GM12878 (cell line): ENCODE measurements at regions of chr11 and their contacts with region 1.

Region 1: DNA sequence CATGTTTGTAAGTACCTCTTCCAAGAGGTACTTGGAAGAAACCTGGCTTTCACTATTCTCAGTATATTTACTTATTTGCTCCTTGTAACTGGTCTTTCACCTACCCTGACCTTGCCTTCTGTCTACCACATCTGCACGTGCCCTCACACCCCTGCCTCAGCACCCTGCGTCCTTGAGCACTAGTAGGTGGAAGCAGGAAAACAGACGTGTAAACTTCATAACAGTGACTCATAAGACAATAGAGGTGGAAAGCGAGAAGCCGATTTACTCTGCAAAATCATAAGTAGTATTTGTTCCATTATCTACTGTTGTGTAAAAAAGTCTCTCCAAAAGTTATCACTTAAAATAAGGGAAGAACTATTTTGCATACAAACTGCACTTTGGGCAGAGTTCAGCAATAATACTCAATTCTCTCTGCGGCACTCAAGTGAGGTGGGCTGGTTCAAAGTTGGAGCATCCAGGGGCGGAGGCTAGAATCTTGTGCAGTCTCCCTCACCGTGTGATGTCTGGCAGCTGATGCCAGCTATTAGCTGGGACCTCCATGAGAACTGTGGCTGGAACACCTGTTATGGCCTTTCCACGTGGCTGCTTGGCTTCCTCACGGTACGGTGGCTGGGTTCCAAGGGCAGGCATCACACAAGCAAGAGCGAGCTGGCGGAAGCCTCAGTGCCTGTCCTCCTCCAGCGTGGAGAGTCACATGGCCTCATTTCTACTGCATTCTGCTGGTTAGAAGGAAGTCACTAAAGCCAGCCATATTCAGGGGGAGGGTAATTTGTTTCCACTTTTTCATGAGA is 30.4 kb downstream of the PACS1 start:
- DNase-seq: no peak
- ATAC-seq: peak; percentile 94
- H3K4me3 ChIP-seq: peak overlapping the region; percentile 30
- H3K27ac ChIP-seq: peak overlapping the region; percentile 55
- H3K4me1 ChIP-seq: peaks cover 28% of the 10 kb centered on the region
- H3K27me3 ChIP-seq: no peaks in the 10 kb centered on the region
- CTCF ChIP-seq: no peak
- EP300 ChIP-seq: no peak
- POLR2A ChIP-seq: peak; percentile 68
- RAD21 ChIP-seq: no peak

Region 2: DNA sequence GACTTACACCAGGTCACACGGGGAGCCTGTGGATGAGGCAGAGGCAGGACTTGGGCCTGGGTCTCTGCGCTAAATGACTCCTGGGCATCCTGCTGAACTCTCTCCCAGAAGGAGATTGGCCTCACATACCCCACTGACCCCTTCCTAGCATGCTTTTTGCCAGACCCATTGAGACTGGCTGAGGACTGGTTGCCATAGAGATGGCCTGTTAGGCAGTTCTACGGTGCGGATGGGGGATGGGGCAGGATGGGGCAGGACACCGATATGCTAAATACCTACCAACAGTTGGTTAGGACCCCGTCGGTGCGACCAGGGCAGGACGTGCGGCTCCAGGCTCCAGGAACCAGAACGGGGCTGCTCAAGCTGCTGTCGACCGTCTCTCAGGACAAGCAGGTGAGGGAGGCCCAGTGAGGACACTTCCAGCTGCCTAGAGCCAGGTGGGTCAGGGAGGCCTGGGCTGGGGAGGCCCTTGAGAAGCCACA is 155.0 kb before region 1 on chr11 and contains the start of gene TSGA10IP:
- CTCF ChIA-PET with region 1: no interaction called
- POLR2A ChIA-PET with region 1: no interaction called
- RAD21 ChIA-PET with region 1: no interaction called
- SMC1A ChIA-PET with region 1: no interaction called
- in situ Hi-C with region 1: no loop called
- intact Hi-C with region 1: no loop called
- DNase-seq: no peak
- ATAC-seq: no peak
- H3K4me3 ChIP-seq: no peak within 1 kb of the TSS
- H3K27ac ChIP-seq: no peak within 1 kb of the TSS
- H3K4me1 ChIP-seq: peaks cover 8% of the 10 kb centered on the region
- H3K27me3 ChIP-seq: no peaks in the 10 kb centered on the region
- CTCF ChIP-seq: no peak
- EP300 ChIP-seq: no peak
- POLR2A ChIP-seq: no peak
- RAD21 ChIP-seq: no peak
- polyA plus RNA-seq, gene TSGA10IP: not detected

Region 3: DNA sequence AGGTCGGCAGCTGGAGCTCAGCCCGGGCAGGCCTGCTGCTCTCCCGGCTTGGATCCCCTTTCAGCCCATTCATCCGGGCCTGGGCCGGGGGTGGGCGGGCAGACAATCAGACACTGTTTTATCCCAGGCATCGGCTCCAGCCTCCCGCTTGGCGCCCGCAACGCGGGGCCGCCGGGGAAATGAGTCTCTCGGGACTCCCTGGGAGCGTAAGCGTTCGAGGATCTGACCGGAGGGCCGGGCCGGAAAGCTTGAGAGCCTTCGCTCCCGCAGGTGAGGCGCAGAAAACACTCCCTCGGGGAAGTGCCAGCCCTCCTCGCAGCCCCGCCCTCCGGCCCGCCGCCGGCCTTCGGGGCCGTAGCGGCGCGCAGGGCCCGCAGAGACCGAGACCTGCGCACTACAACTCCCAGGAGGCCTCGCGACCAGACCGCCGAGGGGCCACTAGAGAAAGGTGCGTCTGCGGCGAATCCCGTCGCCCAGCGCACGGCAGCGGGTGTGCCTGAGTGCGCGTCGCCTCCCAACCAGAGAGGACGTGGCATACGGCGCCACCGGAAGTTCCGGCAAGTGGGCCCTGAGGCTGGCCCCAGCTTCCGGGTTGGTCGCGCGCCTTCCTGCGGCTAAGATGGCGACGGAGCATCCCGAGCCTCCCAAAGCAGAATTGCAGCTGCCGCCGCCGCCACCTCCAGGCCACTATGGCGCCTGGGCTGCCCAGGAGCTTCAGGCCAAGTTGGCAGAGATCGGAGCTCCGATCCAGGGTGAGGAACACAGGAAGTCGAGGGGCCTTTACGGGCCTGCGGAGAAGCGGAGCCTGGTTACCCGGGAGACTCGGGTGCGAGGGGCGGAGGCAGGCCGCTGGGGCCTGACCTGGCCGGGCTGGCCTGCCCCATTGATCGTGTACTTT is 48.5 kb before region 1 on chr11 and contains the start of gene SF3B2:
- CTCF ChIA-PET with region 1: no interaction called
- POLR2A ChIA-PET with region 1: interaction called, 14 read pairs
- RAD21 ChIA-PET with region 1: no interaction called
- SMC1A ChIA-PET with region 1: no interaction called
- in situ Hi-C with region 1: no loop called
- intact Hi-C with region 1: no loop called
- DNase-seq: peak; percentile 96
- ATAC-seq: peak; percentile 98
- H3K4me3 ChIP-seq: peak within 1 kb of the TSS; percentile 98
- H3K27ac ChIP-seq: peak within 1 kb of the TSS; percentile 82
- H3K4me1 ChIP-seq: peaks cover 15% of the 10 kb centered on the region
- H3K27me3 ChIP-seq: no peaks in the 10 kb centered on the region
- CTCF ChIP-seq: no peak
- EP300 ChIP-seq: no peak
- POLR2A ChIP-seq: peak; percentile 97
- RAD21 ChIP-seq: no peak
- polyA plus RNA-seq, gene SF3B2: 56.3 to 123 TPM

Region 4: DNA sequence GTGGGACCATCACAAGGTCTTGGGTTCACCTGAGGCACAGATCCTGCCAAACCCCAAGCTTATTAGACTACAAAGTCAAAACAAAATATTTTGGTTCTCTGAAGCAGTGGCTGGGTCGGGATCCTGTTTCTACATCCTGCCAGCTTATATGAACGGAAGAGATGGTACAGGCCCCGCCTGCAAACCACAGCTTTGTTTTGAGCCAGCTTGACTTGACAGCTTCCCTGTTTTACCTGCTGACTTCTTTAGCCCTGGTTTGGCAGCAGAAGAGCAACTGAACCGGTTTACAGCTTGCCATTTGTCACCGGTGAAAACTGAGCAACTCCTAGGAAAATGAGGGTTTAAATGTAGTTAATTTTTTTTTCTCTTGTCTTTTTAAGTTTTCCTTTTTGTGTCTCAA is 19.0 kb before region 1 on chr11:
- CTCF ChIA-PET with region 1: no interaction called
- POLR2A ChIA-PET with region 1: interaction called, 7 read pairs
- RAD21 ChIA-PET with region 1: interaction called, 4 read pairs
- SMC1A ChIA-PET with region 1: interaction called, 11 read pairs
- in situ Hi-C with region 1: no loop called
- intact Hi-C with region 1: no loop called
- DNase-seq: no peak
- ATAC-seq: peak; percentile 93
- H3K4me3 ChIP-seq: peak overlapping the region; percentile 8; the same call in 1 of the 2 replicates
- H3K27ac ChIP-seq: peak overlapping the region; percentile 60
- H3K4me1 ChIP-seq: peaks cover 31% of the 10 kb centered on the region
- H3K27me3 ChIP-seq: no peaks in the 10 kb centered on the region
- CTCF ChIP-seq: no peak
- EP300 ChIP-seq: no peak
- POLR2A ChIP-seq: no peak
- RAD21 ChIP-seq: no peak

Region 5: GRCh38 chr11:66119348-66120133 is 19.1 kb after region 1 on chr11:
- CTCF ChIA-PET with region 1: interaction called, 5 read pairs
- POLR2A ChIA-PET with region 1: interaction called, 15 read pairs
- RAD21 ChIA-PET with region 1: interaction called, 6 read pairs
- SMC1A ChIA-PET with region 1: interaction called, 18 read pairs
- in situ Hi-C with region 1: no loop called
- intact Hi-C with region 1: no loop called
- DNase-seq: no peak
- ATAC-seq: peak; percentile 8; the same call in 1 of the 3 replicates
- H3K4me3 ChIP-seq: no peak overlapping the region
- H3K27ac ChIP-seq: no peak overlapping the region; the same call in 1 of the 2 replicates
- H3K4me1 ChIP-seq: peaks cover 51% of the 10 kb centered on the region
- H3K27me3 ChIP-seq: no peaks in the 10 kb centered on the region
- CTCF ChIP-seq: no peak
- EP300 ChIP-seq: no peak
- POLR2A ChIP-seq: no peak
- RAD21 ChIP-seq: no peak

Region 6: GRCh38 chr11:66126808-66127555 is 26.5 kb after region 1 on chr11:
- CTCF ChIA-PET with region 1: interaction called, 4 read pairs
- POLR2A ChIA-PET with region 1: no interaction called
- RAD21 ChIA-PET with region 1: interaction called, 7 read pairs
- SMC1A ChIA-PET with region 1: interaction called, 10 read pairs
- in situ Hi-C with region 1: no loop called
- intact Hi-C with region 1: no loop called
- DNase-seq: no peak
- ATAC-seq: peak; percentile 87
- H3K4me3 ChIP-seq: peak overlapping the region; percentile 60
- H3K27ac ChIP-seq: peak overlapping the region; percentile 91
- H3K4me1 ChIP-seq: peaks cover 52% of the 10 kb centered on the region
- H3K27me3 ChIP-seq: no peaks in the 10 kb centered on the region
- CTCF ChIP-seq: 0 out of 6 replicates have a peak, but pooled peaks of 1 of the 3 experiments have one; percentile 9
- EP300 ChIP-seq: no peak
- POLR2A ChIP-seq: peak; percentile 64
- RAD21 ChIP-seq: no peak